ENCODE measurements at regions of chr6 and their contacts with region 1.

Region 1: DNA sequence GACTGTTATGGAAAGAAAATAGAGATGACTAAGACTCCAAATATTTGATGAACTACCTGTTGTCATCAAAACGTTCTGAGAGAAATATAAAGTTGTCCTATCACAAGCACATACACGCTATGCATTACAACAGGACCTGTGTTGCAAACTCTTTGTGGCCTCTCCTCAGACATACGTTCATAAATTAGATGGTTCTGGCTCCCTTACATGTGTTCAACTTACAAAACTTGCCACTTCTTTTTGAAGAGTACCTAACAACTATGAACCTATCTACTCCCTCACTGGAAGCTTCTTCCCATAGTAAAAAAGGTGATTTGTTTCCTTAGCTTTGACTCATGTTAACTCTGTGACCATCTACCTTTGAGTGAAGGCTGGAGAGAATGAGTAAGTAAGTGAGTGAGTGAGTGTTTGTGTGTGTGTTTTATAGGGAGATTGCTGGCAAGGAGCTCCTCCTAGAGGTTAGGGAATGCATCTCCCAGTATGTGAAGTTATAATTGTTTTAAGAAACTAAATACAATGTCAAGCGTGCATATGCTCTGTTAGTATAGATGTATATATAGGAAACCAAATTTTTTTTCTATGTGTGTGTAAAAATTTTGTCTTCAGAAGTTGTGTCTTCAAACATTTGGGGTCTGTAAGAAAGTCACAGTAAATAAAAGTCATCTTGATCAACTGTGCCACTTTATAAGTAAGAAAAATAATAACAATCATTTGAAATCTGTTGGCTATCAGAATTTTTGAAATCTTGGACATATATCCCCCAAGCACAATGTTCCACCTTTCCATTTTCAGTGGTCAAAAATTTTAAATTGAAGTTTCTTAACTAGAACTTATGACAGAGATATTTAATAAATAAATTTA is 1211.1 kb upstream of the GJE1 start:
- DNase-seq: peak; percentile 61
- ATAC-seq: peak; percentile 97
- H3K4me3 ChIP-seq: no peak overlapping the region
- H3K27ac ChIP-seq: no peak overlapping the region
- H3K4me1 ChIP-seq: no peaks in the 10 kb centered on the region
- H3K27me3 ChIP-seq: no peaks in the 10 kb centered on the region
- CTCF ChIP-seq: peak; percentile 80
- EP300 ChIP-seq: no peak
- POLR2A ChIP-seq: no peak
- RAD21 ChIP-seq: peak; percentile 67

Region 2: GRCh38 chr6:139369568-139370282 is 1551.9 kb before region 1 on chr6:
- CTCF ChIA-PET with region 1: interaction called, 3 read pairs
- POLR2A ChIA-PET with region 1: interaction called, 3 read pairs
- in situ Hi-C with region 1: loop called (anchors 25 kb)
- intact Hi-C with region 1: loop called (anchors 1 kb)
- DNase-seq: peak; percentile 95
- ATAC-seq: peak; percentile 3
- H3K4me3 ChIP-seq: peak overlapping the region; percentile 6 to 31 (median 13); a peak in 3 of 6 replicates
- H3K27ac ChIP-seq: peak overlapping the region; percentile 59
- H3K4me1 ChIP-seq: peaks cover 46% of the 10 kb centered on the region
- H3K27me3 ChIP-seq: peaks cover 0 to 10% of the 10 kb centered on the region in 2 experiments; a peak in 1 of 5 replicates
- CTCF ChIP-seq: peak; percentile 72
- EP300 ChIP-seq: peak in 1 of 2 experiments; percentile 71; a peak in 1 of 4 replicates
- POLR2A ChIP-seq: peak in 1 of 2 experiments; percentile 48; a peak in 1 of 4 replicates
- RAD21 ChIP-seq: peak; percentile 78

Region 3: DNA sequence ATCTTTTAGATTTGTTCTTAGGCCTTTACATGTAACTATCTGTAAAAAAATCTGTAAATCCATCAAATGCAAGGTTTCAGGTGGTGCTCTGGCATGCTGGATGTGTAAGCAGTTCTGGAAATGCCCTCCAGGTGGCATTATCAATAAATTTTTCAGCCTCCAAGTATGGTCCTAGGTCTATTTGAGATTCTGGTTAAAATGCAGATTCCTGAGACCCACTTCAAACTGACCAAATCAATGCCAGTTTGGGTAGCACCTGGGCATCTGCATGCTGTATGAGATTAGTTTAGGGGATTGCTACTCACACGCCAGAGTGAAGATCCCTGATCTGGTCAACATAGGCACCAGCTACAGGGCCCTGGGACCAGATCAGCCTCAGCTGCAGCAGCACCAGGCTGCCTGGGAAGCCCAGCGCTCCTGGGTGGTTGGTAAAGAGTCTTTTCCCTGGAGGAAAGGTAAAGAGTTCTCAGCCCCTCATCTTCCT is 1039.8 kb before region 1 on chr6:
- CTCF ChIA-PET with region 1: interaction called, 4 read pairs
- POLR2A ChIA-PET with region 1: no interaction called
- in situ Hi-C with region 1: no loop called
- intact Hi-C with region 1: loop called (anchors 5 kb)
- DNase-seq: peak; percentile 34
- ATAC-seq: peak; percentile 88
- H3K4me3 ChIP-seq: no peak overlapping the region
- H3K27ac ChIP-seq: no peak overlapping the region
- H3K4me1 ChIP-seq: no peaks in the 10 kb centered on the region
- H3K27me3 ChIP-seq: no peaks in the 10 kb centered on the region
- CTCF ChIP-seq: peak; percentile 55
- EP300 ChIP-seq: no peak
- POLR2A ChIP-seq: no peak
- RAD21 ChIP-seq: peak; percentile 37; the same call in 1 of the 2 replicates

Region 4: GRCh38 chr6:140494321-140495075 is 427.1 kb before region 1 on chr6:
- CTCF ChIA-PET with region 1: no interaction called
- POLR2A ChIA-PET with region 1: no interaction called
- in situ Hi-C with region 1: no loop called
- intact Hi-C with region 1: loop called (anchors 5 kb)
- DNase-seq: no peak
- ATAC-seq: no peak
- H3K4me3 ChIP-seq: no peak overlapping the region
- H3K27ac ChIP-seq: no peak overlapping the region
- H3K4me1 ChIP-seq: no peaks in the 10 kb centered on the region
- H3K27me3 ChIP-seq: no peaks in the 10 kb centered on the region
- CTCF ChIP-seq: no peak
- EP300 ChIP-seq: no peak
- POLR2A ChIP-seq: no peak
- RAD21 ChIP-seq: no peak

Region 5: GRCh38 chr6:141562851-141563763 is 641.5 kb after region 1 on chr6:
- CTCF ChIA-PET with region 1: no interaction called
- POLR2A ChIA-PET with region 1: no interaction called
- in situ Hi-C with region 1: no loop called
- intact Hi-C with region 1: loop called (anchors 10 kb)
- DNase-seq: peak; percentile 74
- ATAC-seq: peak; percentile 92
- H3K4me3 ChIP-seq: no peak overlapping the region
- H3K27ac ChIP-seq: no peak overlapping the region
- H3K4me1 ChIP-seq: peaks cover 8% of the 10 kb centered on the region
- H3K27me3 ChIP-seq: no peaks in the 10 kb centered on the region
- CTCF ChIP-seq: peak; percentile 86
- EP300 ChIP-seq: no peak
- POLR2A ChIP-seq: no peak
- RAD21 ChIP-seq: peak; percentile 90